Mucosa of descending colon (tissue), 3 donors: ENCODE measurements at regions of chr17 and their contacts with region 1.

Region 1: GRCh38 chr17:50297407-50297865 is 23.2 kb downstream of the TMEM92 start:
- DNase-seq: peak; percentile 79 to 84 (median 83)
- ATAC-seq: peak; percentile 94
- H3K4me3 ChIP-seq: no peak overlapping the region
- H3K4me1 ChIP-seq: no peaks in the 10 kb centered on the region
- CTCF ChIP-seq: peak; percentile 84

Region 2: DNA sequence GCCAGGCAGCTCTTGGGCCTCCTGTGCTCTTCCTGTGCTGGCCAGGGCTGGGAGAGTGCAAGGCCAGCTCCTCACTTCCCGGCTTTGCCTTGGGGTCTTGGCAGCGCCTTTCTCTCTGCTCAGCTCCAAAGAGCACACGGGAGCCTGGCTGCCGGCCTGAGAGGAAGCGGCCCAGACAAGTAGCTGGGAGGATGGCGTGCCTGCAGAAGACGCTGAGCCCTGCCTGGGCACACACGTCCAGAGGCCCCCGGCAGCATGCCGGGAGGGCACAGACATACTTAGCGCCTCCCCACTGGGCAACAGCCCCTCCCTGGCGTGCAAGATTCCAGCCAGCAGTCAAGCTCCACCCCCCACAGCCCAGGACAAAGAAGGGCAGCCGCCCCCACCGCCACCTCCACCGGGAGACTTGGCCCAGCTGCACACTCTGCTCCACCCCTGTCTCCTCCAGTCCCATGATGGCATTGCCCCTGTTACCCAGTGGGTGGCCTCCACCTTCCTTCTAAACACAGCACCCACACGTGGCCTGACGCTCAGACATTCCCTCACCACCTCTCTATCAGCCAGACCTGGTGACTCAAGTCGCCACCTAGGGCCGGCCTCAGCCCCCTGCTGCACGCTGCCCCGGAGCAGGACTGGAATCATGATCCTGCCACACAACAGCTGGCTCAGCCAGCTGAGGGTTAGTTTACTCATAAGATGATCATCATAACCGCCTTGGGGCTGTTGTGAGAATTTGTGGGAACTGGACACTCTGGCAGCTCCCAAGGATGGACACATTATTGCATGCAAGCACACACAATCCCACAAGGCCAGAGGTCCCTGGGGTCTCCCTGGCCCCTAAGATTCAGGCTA is 119.2 kb before region 1 on chr17:
- intact Hi-C with region 1: loop called in 1 of 2 experiments (anchors 10 kb)
- DNase-seq: peak; percentile 77 to 85 (median 84)
- ATAC-seq: peak; percentile 91
- H3K4me3 ChIP-seq: no peak overlapping the region
- H3K4me1 ChIP-seq: peaks cover 5% of the 10 kb centered on the region
- CTCF ChIP-seq: peak; percentile 54

Region 3: GRCh38 chr17:50361561-50362480 is 64.4 kb after region 1 on chr17:
- intact Hi-C with region 1: no loop called
- DNase-seq: peak in 2 of 3 donors; percentile 61 to 70
- ATAC-seq: peak; percentile 86
- H3K4me3 ChIP-seq: no peak overlapping the region
- H3K4me1 ChIP-seq: peaks cover 5% of the 10 kb centered on the region
- CTCF ChIP-seq: peak; percentile 79